B cell (primary cell): ENCODE measurements at regions of chr10 and their contacts with region 1.

Region 1: DNA sequence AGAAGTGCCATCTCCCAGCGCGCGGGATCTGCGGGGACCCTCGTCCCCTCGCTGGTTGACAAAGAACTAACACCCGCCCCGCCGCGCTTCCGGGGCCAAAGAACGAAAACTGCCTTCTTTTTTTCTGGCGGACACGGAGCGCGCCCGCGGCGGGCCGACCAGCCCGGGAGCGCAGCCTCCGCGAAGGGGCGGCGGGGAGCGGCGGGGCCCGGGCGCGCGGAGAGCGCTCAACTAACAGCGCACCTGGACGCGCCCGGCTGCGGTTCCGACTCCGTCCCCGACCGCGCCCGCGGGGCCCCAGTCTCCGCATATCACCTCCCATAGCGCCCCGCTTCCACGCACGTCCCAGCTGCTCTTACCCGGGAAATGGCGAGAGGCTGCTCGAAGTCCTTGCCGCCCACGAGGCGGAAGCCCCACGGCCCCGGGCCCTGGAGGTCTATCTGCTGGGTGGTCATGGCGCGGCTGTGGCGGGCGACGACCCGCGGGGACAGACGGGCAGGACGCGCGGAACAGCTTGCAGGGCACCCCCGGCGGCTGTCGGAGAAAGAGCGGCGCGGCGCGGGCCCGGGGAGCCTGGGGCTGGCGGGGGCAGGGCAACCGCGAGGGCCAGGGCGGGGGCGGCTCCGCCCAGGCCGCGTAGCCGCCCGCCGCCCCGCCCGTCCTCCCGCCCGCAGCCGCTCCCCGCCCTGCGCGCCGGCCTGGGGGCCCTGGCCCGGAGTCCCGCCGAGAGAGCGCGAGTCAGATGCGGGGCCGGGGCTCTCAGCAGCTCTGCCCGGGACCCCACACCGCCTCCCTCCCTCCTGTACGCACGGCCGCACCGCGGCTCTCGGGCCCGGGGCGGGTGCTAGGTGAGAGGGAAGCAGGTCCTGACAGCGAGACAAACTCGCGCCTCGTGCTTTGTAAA is at the start of gene PDLIM1:
- DNase-seq: peak; percentile 90
- ATAC-seq: peak; percentile 69
- H3K4me3 ChIP-seq: peak within 1 kb of the TSS; percentile 36 to 94 (median 91)
- H3K4me3 Mint-ChIP-seq: peak within 1 kb of the TSS; percentile 93
- H3K27ac ChIP-seq: peak within 1 kb of the TSS; percentile 89 to 93
- H3K27ac Mint-ChIP-seq: peak within 1 kb of the TSS; percentile 95
- H3K4me1 ChIP-seq: peaks cover 83 to 87% of the 10 kb centered on the region in 2 donors
- H3K4me1 Mint-ChIP-seq: peaks cover 83% of the 10 kb centered on the region
- H3K27me3 ChIP-seq: no peaks in the 10 kb centered on the region
- H3K27me3 Mint-ChIP-seq: no peaks in the 10 kb centered on the region
- CTCF ChIP-seq: peak; percentile 29
- total RNA-seq, gene PDLIM1: 123 and 126 TPM in 2 replicates

Region 2: GRCh38 chr10:94645285-94645684 is 645.4 kb before region 1 on chr10:
- CTCF ChIA-PET with region 1: no interaction called
- POLR2A ChIA-PET with region 1: no interaction called
- intact Hi-C with region 1: no loop called
- DNase-seq: no peak
- ATAC-seq: no peak
- H3K4me3 ChIP-seq: no peak overlapping the region
- H3K4me3 Mint-ChIP-seq: no peak overlapping the region
- H3K27ac ChIP-seq: no peak overlapping the region
- H3K27ac Mint-ChIP-seq: no peak overlapping the region
- H3K4me1 ChIP-seq: no peaks in the 10 kb centered on the region
- H3K4me1 Mint-ChIP-seq: no peaks in the 10 kb centered on the region
- H3K27me3 ChIP-seq: no peaks in the 10 kb centered on the region
- H3K27me3 Mint-ChIP-seq: peaks cover under 1% of the 10 kb centered on the region
- CTCF ChIP-seq: no peak

Region 3: GRCh38 chr10:95183271-95184230 is 107.2 kb before region 1 on chr10:
- CTCF ChIA-PET with region 1: no interaction called
- POLR2A ChIA-PET with region 1: no interaction called
- intact Hi-C with region 1: loop called (anchors 5 kb)
- DNase-seq: peak; percentile 89
- ATAC-seq: peak; percentile 97
- H3K4me3 ChIP-seq: peak overlapping the region; percentile 41 to 75 (median 55)
- H3K4me3 Mint-ChIP-seq: peak overlapping the region; percentile 87
- H3K27ac ChIP-seq: peak overlapping the region; percentile 25 to 79
- H3K27ac Mint-ChIP-seq: peak overlapping the region; percentile 82
- H3K4me1 ChIP-seq: peaks cover 0 to 7% of the 10 kb centered on the region in 2 donors
- H3K4me1 Mint-ChIP-seq: peaks cover 7% of the 10 kb centered on the region
- H3K27me3 ChIP-seq: no peaks in the 10 kb centered on the region
- H3K27me3 Mint-ChIP-seq: no peaks in the 10 kb centered on the region
- CTCF ChIP-seq: peak; percentile 97

Region 4: DNA sequence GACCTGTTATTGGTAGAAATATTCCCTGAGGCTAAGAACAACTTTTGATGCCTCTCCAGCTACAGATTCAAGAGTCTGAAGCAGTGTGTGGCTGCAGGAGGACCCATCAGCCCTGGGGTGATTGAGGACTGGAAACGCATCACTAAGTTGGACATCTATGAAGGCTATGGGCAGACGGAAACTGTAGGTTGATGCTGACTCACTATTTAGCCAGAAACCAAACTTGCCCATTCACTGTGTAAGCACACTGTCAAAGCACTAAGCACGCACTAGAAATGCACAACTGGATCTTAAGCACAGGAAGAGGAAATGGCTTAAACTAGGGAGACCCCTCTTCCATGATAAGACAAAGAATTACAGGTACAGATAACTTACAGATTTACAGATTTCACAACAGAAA is 75.9 kb before region 1 on chr10:
- CTCF ChIA-PET with region 1: no interaction called
- POLR2A ChIA-PET with region 1: no interaction called
- intact Hi-C with region 1: no loop called
- DNase-seq: no peak
- ATAC-seq: no peak
- H3K4me3 ChIP-seq: no peak overlapping the region
- H3K4me3 Mint-ChIP-seq: no peak overlapping the region
- H3K27ac ChIP-seq: no peak overlapping the region
- H3K27ac Mint-ChIP-seq: no peak overlapping the region
- H3K4me1 ChIP-seq: no peaks in the 10 kb centered on the region
- H3K4me1 Mint-ChIP-seq: no peaks in the 10 kb centered on the region
- H3K27me3 ChIP-seq: no peaks in the 10 kb centered on the region
- H3K27me3 Mint-ChIP-seq: no peaks in the 10 kb centered on the region
- CTCF ChIP-seq: no peak

Region 5: DNA sequence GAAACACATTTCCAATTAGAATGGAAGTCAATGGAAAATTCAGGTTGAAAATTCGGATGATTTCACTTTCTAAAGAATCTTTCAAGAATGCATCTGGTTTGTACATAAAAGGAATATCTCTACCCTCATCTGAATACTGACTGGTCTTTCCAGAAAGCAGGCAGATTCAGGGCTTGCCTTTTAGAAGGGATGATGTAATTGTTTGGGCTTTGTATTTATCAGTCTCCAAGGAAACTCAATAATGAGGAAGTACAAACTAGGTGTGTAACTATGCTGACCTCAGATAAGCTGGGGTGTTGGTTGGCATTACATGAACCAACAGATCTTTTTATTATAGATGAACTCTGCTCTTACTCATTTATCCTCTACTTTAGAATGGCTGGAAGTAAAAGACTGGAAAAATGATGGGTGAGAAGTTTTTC is 24.0 kb before region 1 on chr10:
- CTCF ChIA-PET with region 1: interaction called, 4 read pairs
- POLR2A ChIA-PET with region 1: interaction called, 4 read pairs
- intact Hi-C with region 1: loop called (anchors 1 kb)
- DNase-seq: peak; percentile 88
- ATAC-seq: peak; percentile 77
- H3K4me3 ChIP-seq: peak overlapping the region in 1 of 5 experiments; percentile 30
- H3K4me3 Mint-ChIP-seq: peak overlapping the region; percentile 36
- H3K27ac ChIP-seq: peak overlapping the region; percentile 78 to 92
- H3K27ac Mint-ChIP-seq: peak overlapping the region; percentile 97
- H3K4me1 ChIP-seq: peaks cover 28 to 41% of the 10 kb centered on the region in 2 donors
- H3K4me1 Mint-ChIP-seq: peaks cover 53% of the 10 kb centered on the region
- H3K27me3 ChIP-seq: no peaks in the 10 kb centered on the region
- H3K27me3 Mint-ChIP-seq: no peaks in the 10 kb centered on the region
- CTCF ChIP-seq: no peak

Region 6: DNA sequence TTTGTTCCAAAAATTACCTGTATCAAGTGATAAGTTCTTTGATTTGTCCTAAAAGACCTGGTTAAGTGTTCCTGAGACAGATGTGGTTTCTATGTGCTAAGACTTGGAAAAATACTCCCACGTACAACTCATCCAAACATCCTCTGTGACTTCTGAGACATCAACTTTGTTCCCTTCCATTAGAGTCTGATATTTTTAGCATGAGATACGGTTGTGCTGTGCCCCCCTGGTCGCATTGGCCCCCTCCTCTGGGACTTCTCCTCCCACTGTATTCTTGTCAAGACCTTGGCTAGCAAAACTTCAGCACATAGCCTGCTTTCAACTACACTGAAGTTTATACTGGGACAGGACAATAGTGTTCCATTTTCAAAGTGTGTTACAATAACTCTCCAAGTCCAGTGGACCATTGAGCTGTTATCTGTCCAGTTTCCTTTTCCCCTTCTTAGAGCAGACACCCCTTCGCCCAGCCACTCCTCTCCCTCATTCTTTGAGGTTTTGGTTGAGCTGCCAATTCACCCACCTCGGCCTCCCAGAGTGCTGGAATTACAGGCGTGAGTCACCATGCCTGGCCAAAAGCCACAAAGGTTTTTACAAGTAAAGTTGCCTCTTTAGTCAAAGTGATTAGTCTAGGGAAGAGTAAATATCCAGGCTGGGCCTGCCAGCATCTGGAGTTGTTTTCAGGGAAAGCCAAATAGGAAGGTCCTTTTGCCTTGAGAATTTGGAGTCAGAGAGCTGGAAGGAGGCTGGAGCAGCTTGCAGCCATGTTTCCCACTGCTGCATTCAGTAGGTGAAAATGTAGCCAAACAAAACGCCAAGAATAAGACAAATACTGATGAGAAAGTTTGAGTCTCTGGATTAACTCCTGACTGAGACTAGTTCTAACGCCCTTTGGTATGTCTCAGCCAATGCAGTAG is 17.9 kb after region 1 on chr10:
- CTCF ChIA-PET with region 1: interaction called, 6 read pairs
- POLR2A ChIA-PET with region 1: interaction called, 3 read pairs
- intact Hi-C with region 1: loop called (anchors 2 kb)
- DNase-seq: no peak
- ATAC-seq: no peak
- H3K4me3 ChIP-seq: no peak overlapping the region
- H3K4me3 Mint-ChIP-seq: no peak overlapping the region
- H3K27ac ChIP-seq: no peak overlapping the region
- H3K27ac Mint-ChIP-seq: peak overlapping the region; percentile 51
- H3K4me1 ChIP-seq: peaks cover 16 to 22% of the 10 kb centered on the region in 2 donors
- H3K4me1 Mint-ChIP-seq: peaks cover 25% of the 10 kb centered on the region
- H3K27me3 ChIP-seq: peaks cover 0 to 4% (median 0%) of the 10 kb centered on the region in 4 experiments
- H3K27me3 Mint-ChIP-seq: no peaks in the 10 kb centered on the region
- CTCF ChIP-seq: no peak

Region 7: DNA sequence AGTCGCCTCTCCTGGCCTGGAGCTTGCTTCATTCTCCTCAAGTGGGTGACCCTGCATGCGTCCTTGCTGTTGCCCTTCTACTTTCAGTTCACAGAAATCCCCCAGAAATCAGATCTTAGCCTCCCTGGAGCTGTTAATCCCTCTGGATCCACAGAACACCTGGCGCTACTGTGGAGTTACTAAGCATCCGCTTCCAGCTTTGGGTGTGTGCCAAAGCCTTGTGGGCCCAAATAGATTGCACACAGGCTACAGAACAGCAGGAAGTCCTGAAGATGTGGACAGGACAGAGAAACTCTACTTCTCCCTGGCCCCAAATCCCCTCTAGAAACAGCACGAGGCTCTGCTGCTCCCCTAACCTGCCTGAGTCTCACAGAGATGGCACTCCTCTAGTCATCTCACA is 36.7 kb after region 1 on chr10:
- CTCF ChIA-PET with region 1: no interaction called
- POLR2A ChIA-PET with region 1: no interaction called
- intact Hi-C with region 1: loop called (anchors 5 kb)
- DNase-seq: no peak
- ATAC-seq: no peak
- H3K4me3 ChIP-seq: no peak overlapping the region
- H3K4me3 Mint-ChIP-seq: no peak overlapping the region
- H3K27ac ChIP-seq: no peak overlapping the region
- H3K27ac Mint-ChIP-seq: no peak overlapping the region
- H3K4me1 ChIP-seq: peaks cover 7 to 9% of the 10 kb centered on the region in 2 donors
- H3K4me1 Mint-ChIP-seq: peaks cover 9% of the 10 kb centered on the region
- H3K27me3 ChIP-seq: no peaks in the 10 kb centered on the region
- H3K27me3 Mint-ChIP-seq: no peaks in the 10 kb centered on the region
- CTCF ChIP-seq: no peak

Region 8: GRCh38 chr10:95741807-95742467 is 451.2 kb after region 1 on chr10:
- CTCF ChIA-PET with region 1: no interaction called
- POLR2A ChIA-PET with region 1: no interaction called
- intact Hi-C with region 1: loop called (anchors 10 kb)
- DNase-seq: peak; percentile 79
- ATAC-seq: peak; percentile 84
- H3K4me3 ChIP-seq: peak overlapping the region; percentile 7 to 63 (median 49)
- H3K4me3 Mint-ChIP-seq: peak overlapping the region; percentile 90
- H3K27ac ChIP-seq: peak overlapping the region; percentile 76 to 78
- H3K27ac Mint-ChIP-seq: peak overlapping the region; percentile 98
- H3K4me1 ChIP-seq: peaks cover 44 to 48% of the 10 kb centered on the region in 2 donors
- H3K4me1 Mint-ChIP-seq: peaks cover 55% of the 10 kb centered on the region
- H3K27me3 ChIP-seq: no peaks in the 10 kb centered on the region
- H3K27me3 Mint-ChIP-seq: no peaks in the 10 kb centered on the region
- CTCF ChIP-seq: peak; percentile 66